ENCODE measurements at regions of chr1 and their contacts with region 1.

Region 1: GRCh38 chr1:86704458-86704971 is at the start of gene SH3GLB1:
- DNase-seq: peak; percentile 88 to 96
- H3K4me3 ChIP-seq: peak within 1 kb of the TSS; percentile 77 to 93
- H3K27ac ChIP-seq: peak within 1 kb of the TSS; percentile 96
- H3K4me1 ChIP-seq: peaks cover 44% of the 10 kb centered on the region
- H3K27me3 ChIP-seq: no peaks in the 10 kb centered on the region
- CTCF ChIP-seq: peak; percentile 62 to 92 (median 86)
- POLR2A ChIP-seq: peak in 1 of 2 donors; percentile 43
- total RNA-seq, gene SH3GLB1: 53.8 TPM

Region 2: GRCh38 chr1:86913896-86914634 is 209.6 kb after region 1 on chr1 and contains the start of gene SELENOF:
- intact Hi-C with region 1: loop called (anchors 10 kb)
- DNase-seq: peak; percentile 97 to 99
- H3K4me3 ChIP-seq: peak within 1 kb of the TSS; percentile 77 to 95
- H3K27ac ChIP-seq: peak within 1 kb of the TSS; percentile 90
- H3K4me1 ChIP-seq: peaks cover 42% of the 10 kb centered on the region
- H3K27me3 ChIP-seq: no peaks in the 10 kb centered on the region
- CTCF ChIP-seq: no peak
- POLR2A ChIP-seq: no peak
- total RNA-seq, gene SELENOF: 77.3 TPM

Region 3: GRCh38 chr1:87084244-87084836 is 379.8 kb after region 1 on chr1:
- intact Hi-C with region 1: loop called (anchors 10 kb)
- DNase-seq: no peak
- H3K4me3 ChIP-seq: no peak overlapping the region
- H3K27ac ChIP-seq: no peak overlapping the region
- H3K4me1 ChIP-seq: no peaks in the 10 kb centered on the region
- H3K27me3 ChIP-seq: no peaks in the 10 kb centered on the region
- CTCF ChIP-seq: peak; percentile 14 to 56 (median 39)
- POLR2A ChIP-seq: no peak

Measured in vagina (tissue), 2 donors.